ENCODE measurements at regions of chr15 and their contacts with region 1.

Region 1: DNA sequence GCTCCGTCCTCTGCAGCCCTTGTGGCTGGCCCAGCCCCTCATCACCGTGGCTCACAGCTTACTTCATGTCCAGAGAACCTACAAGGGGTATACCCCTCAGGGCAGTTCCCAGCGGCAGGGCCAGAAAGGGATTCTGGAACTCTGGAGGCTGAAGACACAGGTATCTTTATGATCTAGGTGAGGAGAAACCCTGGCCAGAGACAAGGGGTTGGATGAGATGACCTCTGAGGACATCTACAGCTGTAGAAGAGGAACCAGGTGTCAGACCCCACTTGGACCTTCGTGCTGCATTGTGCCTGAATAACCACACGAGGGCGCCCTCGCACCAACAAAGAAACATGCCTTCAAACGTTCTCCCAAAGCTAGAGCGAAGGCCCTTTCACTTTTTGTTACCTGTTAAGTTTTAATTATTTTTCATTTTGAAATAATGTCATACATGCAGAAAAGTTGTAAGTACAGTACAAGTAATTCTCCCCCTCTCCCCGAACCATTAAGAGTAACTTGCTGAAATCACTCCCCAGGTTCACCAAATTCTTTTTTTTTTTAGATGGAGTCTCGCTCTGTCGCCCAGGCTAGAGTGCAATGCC is 118.7 kb upstream of the SMAD3 start:
- DNase-seq: peak; percentile 89
- ATAC-seq: peak; percentile 94
- H3K4me3 ChIP-seq: peak overlapping the region in 1 of 5 experiments; percentile 46
- H3K4me3 Mint-ChIP-seq: no peak overlapping the region
- H3K27ac ChIP-seq: no peak overlapping the region
- H3K27ac Mint-ChIP-seq: peak overlapping the region; percentile 61
- H3K4me1 ChIP-seq: peaks cover 3 to 12% of the 10 kb centered on the region in 2 donors
- H3K4me1 Mint-ChIP-seq: peaks cover 12% of the 10 kb centered on the region
- H3K27me3 ChIP-seq: no peaks in the 10 kb centered on the region
- H3K27me3 Mint-ChIP-seq: peaks cover 5% of the 10 kb centered on the region
- CTCF ChIP-seq: peak; percentile 87

Region 2: GRCh38 chr15:66957431-66957720 is 10.7 kb after region 1 on chr15:
- CTCF ChIA-PET with region 1: interaction called, 13 read pairs
- POLR2A ChIA-PET with region 1: no interaction called
- intact Hi-C with region 1: no loop called
- DNase-seq: no peak
- ATAC-seq: no peak
- H3K4me3 ChIP-seq: no peak overlapping the region
- H3K4me3 Mint-ChIP-seq: no peak overlapping the region
- H3K27ac ChIP-seq: no peak overlapping the region
- H3K27ac Mint-ChIP-seq: no peak overlapping the region
- H3K4me1 ChIP-seq: peaks cover 5 to 8% of the 10 kb centered on the region in 2 donors
- H3K4me1 Mint-ChIP-seq: peaks cover 8% of the 10 kb centered on the region
- H3K27me3 ChIP-seq: peaks cover 0 to 13% (median 0%) of the 10 kb centered on the region in 4 experiments
- H3K27me3 Mint-ChIP-seq: peaks cover 4% of the 10 kb centered on the region
- CTCF ChIP-seq: no peak

Region 3: DNA sequence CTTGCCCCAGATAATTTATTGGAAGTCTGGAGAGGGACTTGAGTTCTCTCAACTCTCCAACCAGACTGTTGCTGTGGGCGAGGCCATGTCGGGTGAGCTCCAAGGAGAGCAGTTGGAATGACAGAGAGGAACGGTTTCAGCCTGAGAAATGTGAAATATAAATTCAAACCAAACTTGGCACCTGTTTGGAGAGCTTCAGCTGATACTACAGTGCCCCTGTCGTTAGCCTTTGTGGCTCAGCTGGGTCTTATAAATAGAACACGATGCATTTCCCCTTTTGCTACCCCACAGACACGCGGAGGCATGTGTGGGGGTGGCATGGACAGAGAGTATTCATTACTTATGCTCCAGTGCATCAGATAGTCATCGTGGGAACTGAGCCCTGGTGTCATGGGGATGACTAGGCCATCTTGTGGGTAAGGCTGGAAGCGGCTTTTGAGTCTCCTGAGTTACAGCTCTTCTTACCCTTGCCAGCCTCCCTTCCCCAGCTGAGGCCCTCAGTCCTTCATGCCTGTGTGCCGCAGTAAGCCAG is 134.3 kb after region 1 on chr15:
- CTCF ChIA-PET with region 1: interaction called, 20 read pairs
- POLR2A ChIA-PET with region 1: no interaction called
- intact Hi-C with region 1: loop called (anchors 2 kb)
- DNase-seq: peak; percentile 96
- ATAC-seq: peak; percentile 71
- H3K4me3 ChIP-seq: peak overlapping the region in 4 of 5 experiments; percentile 18 to 63 (median 30)
- H3K4me3 Mint-ChIP-seq: peak overlapping the region; percentile 87
- H3K27ac ChIP-seq: peak overlapping the region; percentile 92 to 97
- H3K27ac Mint-ChIP-seq: peak overlapping the region; percentile 97
- H3K4me1 ChIP-seq: peaks cover 96 to 100% of the 10 kb centered on the region in 2 donors
- H3K4me1 Mint-ChIP-seq: peaks cover 97% of the 10 kb centered on the region
- H3K27me3 ChIP-seq: no peaks in the 10 kb centered on the region
- H3K27me3 Mint-ChIP-seq: no peaks in the 10 kb centered on the region
- CTCF ChIP-seq: peak; percentile 61

Region 4: GRCh38 chr15:67181191-67181645 is 234.5 kb after region 1 on chr15:
- CTCF ChIA-PET with region 1: interaction called, 11 read pairs
- POLR2A ChIA-PET with region 1: no interaction called
- intact Hi-C with region 1: loop called (anchors 5 kb)
- DNase-seq: no peak
- ATAC-seq: peak; percentile 47
- H3K4me3 ChIP-seq: no peak overlapping the region
- H3K4me3 Mint-ChIP-seq: no peak overlapping the region
- H3K27ac ChIP-seq: no peak overlapping the region
- H3K27ac Mint-ChIP-seq: peak overlapping the region; percentile 46
- H3K4me1 ChIP-seq: peaks cover 0 to 3% of the 10 kb centered on the region in 2 donors
- H3K4me1 Mint-ChIP-seq: peaks cover 21% of the 10 kb centered on the region
- H3K27me3 ChIP-seq: no peaks in the 10 kb centered on the region
- H3K27me3 Mint-ChIP-seq: no peaks in the 10 kb centered on the region
- CTCF ChIP-seq: no peak

Region 5: DNA sequence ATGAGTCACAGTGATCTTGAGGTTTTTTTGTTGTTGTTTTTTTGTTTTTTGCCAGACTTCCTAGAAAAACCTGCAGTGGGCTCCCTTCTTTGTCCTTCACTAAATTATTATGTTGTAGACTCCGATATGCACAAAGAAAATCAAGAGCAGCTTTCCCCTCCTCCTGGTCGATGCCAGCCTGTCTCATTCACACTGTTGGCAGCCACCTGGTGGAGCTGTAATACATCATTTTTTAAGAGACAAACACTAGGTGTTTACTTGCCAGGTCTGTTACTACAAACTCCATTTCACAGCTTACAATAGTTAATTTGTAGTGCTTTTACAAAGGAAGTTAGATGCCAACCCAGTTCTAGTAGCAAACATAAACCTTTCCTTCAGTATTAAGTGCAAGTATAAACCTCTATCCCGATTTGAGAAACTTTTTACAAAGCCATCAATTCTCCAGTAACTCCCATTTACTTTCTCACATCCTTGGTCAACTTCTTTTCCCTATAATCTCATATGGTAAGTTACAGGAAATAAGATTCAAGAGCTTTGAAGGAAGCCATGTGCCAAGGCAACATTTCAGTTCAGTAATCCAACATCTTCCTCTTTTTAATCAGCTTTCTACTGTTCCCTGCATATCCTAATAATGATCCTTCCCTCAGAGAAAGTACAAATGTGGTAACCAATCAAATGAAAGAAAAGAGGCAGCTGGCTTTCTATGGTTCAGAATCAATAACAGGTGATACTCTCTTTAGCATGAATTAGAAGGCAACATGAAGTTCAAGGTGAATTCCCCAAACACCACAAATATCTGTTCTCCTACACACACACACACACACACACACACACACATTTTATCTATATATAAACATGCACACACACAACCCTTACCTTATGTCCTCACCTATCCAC is 293.8 kb after region 1 on chr15:
- CTCF ChIA-PET with region 1: interaction called, 13 read pairs
- POLR2A ChIA-PET with region 1: no interaction called
- intact Hi-C with region 1: no loop called
- DNase-seq: no peak
- ATAC-seq: no peak
- H3K4me3 ChIP-seq: no peak overlapping the region
- H3K4me3 Mint-ChIP-seq: peak overlapping the region; percentile 52
- H3K27ac ChIP-seq: peak overlapping the region in 1 of 2 donors; percentile 29
- H3K27ac Mint-ChIP-seq: peak overlapping the region; percentile 66
- H3K4me1 ChIP-seq: peaks cover 24 to 28% of the 10 kb centered on the region in 2 donors
- H3K4me1 Mint-ChIP-seq: peaks cover 45% of the 10 kb centered on the region
- H3K27me3 ChIP-seq: no peaks in the 10 kb centered on the region
- H3K27me3 Mint-ChIP-seq: no peaks in the 10 kb centered on the region
- CTCF ChIP-seq: no peak

Region 6: DNA sequence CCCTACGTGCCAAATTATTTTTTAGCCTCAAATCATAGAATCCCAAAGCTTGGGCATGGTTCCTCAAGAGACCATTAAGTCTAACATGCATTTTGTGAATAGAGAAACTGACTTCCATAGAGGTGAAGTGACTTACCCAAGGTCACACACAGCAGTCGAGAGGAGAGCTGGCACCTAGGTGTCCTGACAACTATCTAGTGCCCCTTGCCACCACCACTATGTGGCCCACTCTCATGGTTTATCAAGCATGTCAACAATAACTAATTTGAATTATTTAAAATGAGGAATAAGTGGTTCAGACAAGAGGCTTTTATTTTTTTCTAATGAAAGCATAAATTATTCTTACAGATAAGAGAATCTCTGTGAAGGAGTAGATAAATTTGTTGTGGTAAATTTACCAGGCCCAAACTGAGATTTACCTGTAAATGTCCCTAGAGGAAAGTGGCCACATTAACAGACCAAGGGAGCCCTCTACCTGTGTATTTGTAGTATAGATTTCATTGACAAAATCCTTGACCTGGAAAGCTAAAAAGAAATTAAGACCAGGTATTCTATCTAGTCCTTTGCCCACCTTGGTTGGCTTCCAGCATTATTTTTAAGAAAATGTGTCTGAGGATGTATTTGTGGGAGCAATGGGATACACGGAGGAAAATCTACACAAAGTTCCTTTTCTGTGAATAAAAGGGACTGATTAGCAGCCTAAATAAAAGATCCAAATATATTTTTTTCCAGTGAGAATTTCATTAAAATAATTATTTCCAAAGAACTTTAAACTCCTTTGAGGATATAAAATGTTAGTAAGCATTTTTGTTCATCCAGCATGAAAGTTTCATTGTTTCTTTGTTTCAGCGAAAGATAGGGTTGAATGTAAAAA is 357.1 kb after region 1 on chr15:
- CTCF ChIA-PET with region 1: interaction called, 256 read pairs
- POLR2A ChIA-PET with region 1: interaction called, 3 read pairs
- intact Hi-C with region 1: loop called (anchors 1 kb)
- DNase-seq: peak; percentile 66
- ATAC-seq: no peak
- H3K4me3 ChIP-seq: no peak overlapping the region
- H3K4me3 Mint-ChIP-seq: no peak overlapping the region
- H3K27ac ChIP-seq: no peak overlapping the region
- H3K27ac Mint-ChIP-seq: no peak overlapping the region
- H3K4me1 ChIP-seq: no peaks in the 10 kb centered on the region
- H3K4me1 Mint-ChIP-seq: peaks cover 3% of the 10 kb centered on the region
- H3K27me3 ChIP-seq: no peaks in the 10 kb centered on the region
- H3K27me3 Mint-ChIP-seq: no peaks in the 10 kb centered on the region
- CTCF ChIP-seq: peak; percentile 69